ENCODE measurements at regions of chr10 and their contacts with region 1.

Region 1: DNA sequence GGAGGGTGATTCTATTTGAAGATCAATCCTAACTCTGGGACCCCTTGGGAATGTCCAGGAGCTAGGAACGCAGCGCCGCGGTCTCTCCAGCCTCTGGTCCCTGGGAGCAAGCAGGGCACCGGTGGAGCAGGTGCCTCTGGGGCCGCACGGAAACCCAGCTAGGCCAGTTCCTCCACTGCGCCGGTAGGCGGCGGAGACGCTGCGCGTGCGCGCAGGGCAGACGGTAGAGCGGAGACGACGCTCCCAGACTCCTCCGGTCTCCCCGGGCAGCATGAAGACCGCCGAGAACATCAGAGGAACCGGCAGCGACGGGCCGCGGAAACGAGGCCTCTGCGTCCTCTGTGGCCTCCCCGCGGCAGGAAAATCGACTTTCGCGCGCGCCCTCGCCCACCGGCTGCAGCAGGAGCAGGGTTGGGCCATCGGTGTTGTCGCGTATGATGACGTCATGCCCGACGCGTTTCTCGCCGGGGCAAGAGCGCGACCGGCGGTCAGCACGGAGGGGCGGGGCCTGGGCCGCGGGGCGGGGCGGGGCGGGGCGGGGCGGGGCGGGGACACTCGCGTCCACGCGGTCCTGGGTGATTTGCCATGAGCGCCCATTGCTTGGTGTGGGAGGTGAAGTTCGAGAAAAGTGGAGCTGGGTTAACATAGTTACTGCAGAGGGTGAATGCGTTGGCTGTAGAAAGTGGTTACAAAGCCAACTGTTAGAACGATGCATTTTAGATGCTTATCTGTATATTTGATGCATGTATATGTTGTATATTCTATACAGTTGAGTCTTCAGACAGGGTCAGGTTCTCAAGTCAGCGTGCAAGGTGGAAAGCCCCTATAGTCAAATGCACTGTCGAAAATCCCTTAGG is at the start of gene PSTK:
- DNase-seq: peak; percentile 97
- CTCF ChIP-seq: peak; percentile 89

Region 2: GRCh38 chr10:122953827-122954730 is 26.4 kb before region 1 on chr10 and contains the start of gene C10orf88:
- CTCF ChIA-PET with region 1: interaction called, 11 read pairs
- POLR2A ChIA-PET with region 1: no interaction called
- DNase-seq: peak; percentile 98
- CTCF ChIP-seq: no peak

Region 3: GRCh38 chr10:122999347-122999746 is 18.9 kb after region 1 on chr10:
- CTCF ChIA-PET with region 1: interaction called, 107 read pairs
- POLR2A ChIA-PET with region 1: no interaction called
- DNase-seq: no peak
- CTCF ChIP-seq: no peak

Region 4: DNA sequence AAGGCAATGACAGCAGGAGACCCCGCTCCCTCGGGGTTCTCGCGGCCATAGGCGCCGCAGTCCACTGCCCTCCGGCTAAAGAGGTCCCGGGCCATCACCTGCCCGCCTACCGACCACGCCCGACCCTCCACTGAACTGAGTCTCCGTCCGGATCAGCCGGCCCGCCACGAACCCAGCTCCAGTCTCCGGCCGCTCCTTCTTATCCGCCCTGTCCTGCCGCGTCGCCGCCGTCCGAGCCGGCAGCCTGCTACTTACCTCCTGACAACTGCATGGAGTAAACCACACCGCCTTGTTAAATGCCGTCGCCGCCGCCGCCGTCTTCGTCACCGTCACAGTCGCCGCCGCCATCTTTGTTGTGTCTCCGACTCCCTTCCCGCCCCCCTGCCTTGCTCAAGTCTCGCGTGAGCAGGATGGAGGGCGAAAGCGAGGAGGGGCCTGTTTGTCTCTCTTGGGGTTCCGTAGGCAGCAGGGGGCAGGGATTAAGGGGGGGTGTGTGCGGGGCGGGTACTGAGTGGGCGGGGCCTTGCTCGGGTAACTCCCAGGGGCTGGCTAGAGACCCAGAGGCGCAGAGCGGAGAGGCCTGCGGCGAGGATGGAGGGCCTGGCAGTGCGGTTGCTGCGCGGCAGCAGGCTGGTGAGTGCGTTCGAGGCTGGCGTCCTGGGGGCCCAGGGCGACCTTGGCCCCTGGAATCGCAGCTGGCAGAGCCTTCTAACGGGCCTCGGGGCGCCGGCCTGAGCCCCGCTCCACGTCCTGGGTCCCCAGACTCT is 28.2 kb after region 1 on chr10 and contains the starts of genes ACADSB and IKZF5:
- CTCF ChIA-PET with region 1: interaction called, 84 read pairs
- POLR2A ChIA-PET with region 1: interaction called, 8 read pairs
- DNase-seq: peak; percentile 100
- CTCF ChIP-seq: no peak

Region 5: DNA sequence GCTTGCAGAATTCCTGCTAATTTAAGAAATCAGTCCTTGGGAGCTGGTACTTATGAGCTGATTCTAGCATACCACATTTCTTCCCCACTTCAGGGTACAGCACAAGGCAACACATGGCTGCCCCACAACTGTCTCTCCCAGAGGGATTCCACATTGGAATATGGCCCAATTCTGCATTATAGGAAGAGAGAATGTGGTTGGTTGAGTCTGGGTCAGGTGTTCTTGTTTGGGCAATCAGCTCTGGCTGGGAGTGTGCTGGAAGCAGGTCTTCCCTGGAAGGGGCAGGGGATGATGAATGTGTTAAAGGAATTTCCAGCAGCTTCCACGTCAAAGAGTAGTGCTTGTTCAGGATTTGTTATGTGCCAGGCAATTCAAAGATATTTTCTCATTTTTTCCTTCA is 269.5 kb after region 1 on chr10:
- CTCF ChIA-PET with region 1: no interaction called
- POLR2A ChIA-PET with region 1: no interaction called
- DNase-seq: no peak
- CTCF ChIP-seq: no peak

Region 6: DNA sequence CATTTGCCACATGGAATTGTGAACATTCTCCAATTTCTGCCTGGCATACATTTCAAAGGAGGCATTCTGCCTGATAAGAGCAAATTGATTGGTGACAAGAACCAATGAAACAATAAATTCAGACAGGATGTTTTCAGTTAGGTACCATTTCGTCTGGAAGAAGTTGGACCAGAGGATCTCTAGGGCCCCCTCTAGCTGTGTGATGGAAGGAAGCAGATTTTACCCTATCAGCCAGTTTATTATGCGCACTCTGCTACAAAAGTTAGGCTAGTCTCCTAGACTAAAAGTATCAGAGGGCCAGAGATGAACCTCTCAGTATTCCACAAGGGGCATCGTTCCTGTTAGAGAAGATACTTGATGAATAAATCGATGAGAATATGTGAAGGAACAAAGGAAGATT is 291.7 kb after region 1 on chr10:
- CTCF ChIA-PET with region 1: no interaction called
- POLR2A ChIA-PET with region 1: no interaction called
- DNase-seq: no peak
- CTCF ChIP-seq: no peak

Measured in GM10248 (cell line).